PC-3 (cell line): ENCODE measurements at regions of chr2 and their contacts with region 1.

Region 1: DNA sequence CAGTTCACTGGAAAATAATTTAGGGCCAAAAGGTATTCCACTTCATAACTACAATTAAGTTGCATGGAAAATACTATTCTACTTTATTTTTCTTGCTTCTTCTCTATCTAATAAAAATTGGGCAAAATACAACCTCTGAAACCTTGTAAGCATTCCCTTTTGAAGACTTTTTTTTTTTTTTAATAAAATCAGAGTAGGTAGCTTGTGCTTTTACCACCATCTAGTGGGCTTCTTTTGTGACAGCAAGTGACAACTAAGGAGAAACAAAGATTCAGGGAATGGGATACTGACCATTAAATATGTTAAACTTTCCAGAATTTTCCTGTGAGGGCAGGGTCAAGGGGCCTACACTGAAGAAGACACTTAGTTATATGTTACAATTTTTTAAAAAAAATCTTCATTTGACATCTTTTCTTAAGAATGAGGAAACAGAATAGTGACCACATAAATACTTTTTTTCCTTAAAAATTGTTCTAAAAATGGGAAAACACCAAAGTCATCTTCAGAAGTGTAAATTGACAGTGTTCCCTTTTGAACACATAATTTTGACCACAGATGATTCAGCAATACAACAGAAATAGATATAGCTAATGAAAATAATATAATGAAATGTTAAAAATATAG is 1183.2 kb upstream of the ACVR2A start:
- DNase-seq: peak; percentile 64
- ATAC-seq: no peak; the same call in 1 of the 2 replicates
- H3K4me3 ChIP-seq: no peak overlapping the region
- H3K27ac ChIP-seq: no peak overlapping the region
- H3K4me1 ChIP-seq: peaks cover 9% of the 10 kb centered on the region
- H3K27me3 ChIP-seq: no peaks in the 10 kb centered on the region
- CTCF ChIP-seq: peak; percentile 86

Region 2: GRCh38 chr2:146041274-146041910 is 620.2 kb before region 1 on chr2:
- CTCF ChIA-PET with region 1: no interaction called
- POLR2A ChIA-PET with region 1: no interaction called
- intact Hi-C with region 1: loop called (anchors 10 kb)
- DNase-seq: no peak
- ATAC-seq: no peak
- H3K4me3 ChIP-seq: no peak overlapping the region
- H3K27ac ChIP-seq: no peak overlapping the region
- H3K4me1 ChIP-seq: no peaks in the 10 kb centered on the region
- H3K27me3 ChIP-seq: no peaks in the 10 kb centered on the region
- CTCF ChIP-seq: no peak

Region 3: GRCh38 chr2:146258071-146258470 is 403.5 kb before region 1 on chr2:
- CTCF ChIA-PET with region 1: no interaction called
- POLR2A ChIA-PET with region 1: no interaction called
- intact Hi-C with region 1: no loop called
- DNase-seq: no peak
- ATAC-seq: no peak
- H3K4me3 ChIP-seq: no peak overlapping the region
- H3K27ac ChIP-seq: no peak overlapping the region
- H3K4me1 ChIP-seq: no peaks in the 10 kb centered on the region
- H3K27me3 ChIP-seq: no peaks in the 10 kb centered on the region
- CTCF ChIP-seq: no peak

Region 4: DNA sequence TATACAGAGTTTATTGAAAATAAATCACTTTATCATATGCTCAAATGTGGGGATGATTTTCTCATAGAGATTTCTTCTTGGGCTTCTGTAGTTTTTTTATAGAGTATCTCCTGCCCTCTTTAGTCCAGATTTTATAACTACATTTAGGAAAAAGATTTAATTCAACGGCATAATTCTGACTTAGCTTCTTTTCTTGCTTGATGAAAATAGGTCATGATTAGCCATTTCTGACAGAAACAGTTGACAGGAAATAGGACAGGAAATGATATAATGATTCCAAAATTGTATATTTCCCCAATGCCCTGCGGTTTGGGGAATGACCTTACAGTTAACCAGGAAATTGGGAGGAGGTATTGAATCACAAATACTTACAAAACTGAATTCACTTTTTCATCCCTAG is 348.7 kb before region 1 on chr2:
- CTCF ChIA-PET with region 1: no interaction called
- POLR2A ChIA-PET with region 1: no interaction called
- intact Hi-C with region 1: loop called (anchors 2 kb)
- DNase-seq: peak; percentile 52
- ATAC-seq: peak; percentile 48
- H3K4me3 ChIP-seq: no peak overlapping the region
- H3K27ac ChIP-seq: no peak overlapping the region
- H3K4me1 ChIP-seq: peaks cover 5% of the 10 kb centered on the region
- H3K27me3 ChIP-seq: no peaks in the 10 kb centered on the region
- CTCF ChIP-seq: peak; percentile 63

Region 5: DNA sequence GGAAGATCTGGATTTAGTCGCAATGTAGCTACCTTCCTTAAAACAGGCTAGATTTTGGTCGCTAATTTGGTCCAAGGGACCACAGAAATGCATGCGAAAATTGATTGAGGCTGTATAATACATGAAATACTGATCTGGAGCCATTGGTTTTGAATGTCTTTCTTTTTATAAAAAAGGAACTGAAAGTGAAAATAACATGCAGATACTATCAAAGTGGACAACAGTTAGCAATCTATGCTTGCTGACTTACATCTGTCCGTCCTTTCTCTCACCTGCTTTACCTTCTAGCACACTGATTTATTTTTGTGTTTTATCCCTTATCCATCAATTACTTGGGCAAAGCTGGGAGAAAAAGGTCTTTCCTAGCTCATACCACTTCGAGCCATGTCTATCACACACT is 276.6 kb before region 1 on chr2:
- CTCF ChIA-PET with region 1: interaction called, 10 read pairs
- POLR2A ChIA-PET with region 1: no interaction called
- intact Hi-C with region 1: no loop called
- DNase-seq: no peak
- ATAC-seq: no peak
- H3K4me3 ChIP-seq: no peak overlapping the region
- H3K27ac ChIP-seq: no peak overlapping the region
- H3K4me1 ChIP-seq: no peaks in the 10 kb centered on the region
- H3K27me3 ChIP-seq: no peaks in the 10 kb centered on the region
- CTCF ChIP-seq: no peak

Region 6: DNA sequence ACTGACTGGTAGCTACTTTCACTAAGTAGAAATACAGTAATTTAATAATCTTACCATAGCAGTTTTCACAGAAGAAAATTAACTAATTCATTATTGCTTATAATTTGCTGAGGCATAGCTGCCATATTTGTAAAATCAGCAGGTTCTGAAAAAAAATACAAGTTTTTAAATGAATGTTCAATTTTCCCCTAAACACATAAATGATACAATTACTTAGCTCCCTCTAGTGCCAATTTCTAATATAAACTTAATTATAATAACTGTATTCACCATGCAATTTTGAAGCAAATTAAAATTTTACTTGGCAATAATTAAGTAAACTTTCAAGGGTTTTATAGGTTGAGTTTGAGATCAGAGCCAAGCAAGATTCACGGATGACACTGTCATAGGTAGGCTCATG is 138.4 kb before region 1 on chr2:
- CTCF ChIA-PET with region 1: no interaction called
- POLR2A ChIA-PET with region 1: no interaction called
- intact Hi-C with region 1: loop called (anchors 1 kb)
- DNase-seq: peak; percentile 59
- ATAC-seq: no peak
- H3K4me3 ChIP-seq: no peak overlapping the region
- H3K27ac ChIP-seq: no peak overlapping the region
- H3K4me1 ChIP-seq: no peaks in the 10 kb centered on the region
- H3K27me3 ChIP-seq: no peaks in the 10 kb centered on the region
- CTCF ChIP-seq: peak; percentile 69

Region 7: GRCh38 chr2:146634256-146635097 is 27.1 kb before region 1 on chr2:
- CTCF ChIA-PET with region 1: no interaction called
- POLR2A ChIA-PET with region 1: no interaction called
- intact Hi-C with region 1: loop called (anchors 2 kb)
- DNase-seq: peak; percentile 97
- ATAC-seq: peak; percentile 95
- H3K4me3 ChIP-seq: peak overlapping the region; percentile 49
- H3K27ac ChIP-seq: peak overlapping the region; percentile 87
- H3K4me1 ChIP-seq: peaks cover 26% of the 10 kb centered on the region
- H3K27me3 ChIP-seq: no peaks in the 10 kb centered on the region
- CTCF ChIP-seq: no peak

Region 8: DNA sequence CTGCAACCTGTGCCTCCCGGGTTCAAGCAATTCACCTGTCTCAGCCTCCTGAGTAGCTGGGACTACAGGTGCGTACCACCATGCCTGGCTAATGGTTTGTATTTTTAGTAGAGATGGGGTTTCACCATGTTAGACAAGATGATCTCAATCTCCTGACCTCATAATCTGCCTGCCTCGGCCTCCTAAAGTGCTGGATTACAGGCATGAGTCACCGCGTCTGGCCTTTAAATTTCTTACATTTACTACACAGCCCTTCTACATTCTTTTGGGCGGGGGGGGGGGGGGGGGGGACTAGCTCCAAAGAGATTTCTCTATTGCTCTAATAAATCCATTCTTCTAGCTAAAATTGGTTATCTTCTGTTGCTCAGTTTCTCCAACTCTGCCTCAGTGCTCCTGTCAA is 218.3 kb after region 1 on chr2:
- CTCF ChIA-PET with region 1: no interaction called
- POLR2A ChIA-PET with region 1: no interaction called
- intact Hi-C with region 1: no loop called
- DNase-seq: no peak
- ATAC-seq: no peak
- H3K4me3 ChIP-seq: no peak overlapping the region
- H3K27ac ChIP-seq: no peak overlapping the region
- H3K4me1 ChIP-seq: peaks cover 2% of the 10 kb centered on the region
- H3K27me3 ChIP-seq: no peaks in the 10 kb centered on the region
- CTCF ChIP-seq: no peak

Region 9: GRCh38 chr2:146952696-146953095 is 291.1 kb after region 1 on chr2:
- CTCF ChIA-PET with region 1: no interaction called
- POLR2A ChIA-PET with region 1: no interaction called
- intact Hi-C with region 1: no loop called
- DNase-seq: no peak
- ATAC-seq: no peak
- H3K4me3 ChIP-seq: no peak overlapping the region
- H3K27ac ChIP-seq: no peak overlapping the region
- H3K4me1 ChIP-seq: peaks cover 3% of the 10 kb centered on the region
- H3K27me3 ChIP-seq: no peaks in the 10 kb centered on the region
- CTCF ChIP-seq: no peak

Region 10: DNA sequence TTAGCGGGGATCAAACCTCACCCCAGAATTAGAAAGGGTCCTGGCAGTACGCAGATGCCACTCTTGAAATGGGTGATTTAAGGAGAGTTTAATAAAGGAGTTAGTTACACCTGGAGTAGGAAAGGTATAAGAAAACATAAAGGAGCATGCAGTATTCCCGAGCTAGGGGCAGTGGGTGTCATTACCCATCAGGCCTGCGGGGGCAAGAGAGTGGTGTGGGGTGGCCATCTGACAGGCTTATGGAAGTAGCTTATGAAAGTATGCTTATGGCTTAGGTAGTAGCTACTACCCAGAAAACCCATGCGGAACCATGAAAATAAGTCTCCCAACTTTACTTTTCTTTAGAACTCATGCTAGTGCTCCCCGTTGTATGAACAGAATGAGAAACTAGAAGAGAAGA is 614.4 kb after region 1 on chr2:
- CTCF ChIA-PET with region 1: no interaction called
- POLR2A ChIA-PET with region 1: interaction called, 12 read pairs
- intact Hi-C with region 1: no loop called
- DNase-seq: peak; percentile 21
- ATAC-seq: no peak
- H3K4me3 ChIP-seq: no peak overlapping the region
- H3K27ac ChIP-seq: no peak overlapping the region
- H3K4me1 ChIP-seq: peaks cover 31% of the 10 kb centered on the region
- H3K27me3 ChIP-seq: no peaks in the 10 kb centered on the region
- CTCF ChIP-seq: peak; percentile 44; the same call in 1 of the 2 replicates